Mammary epithelial cell (primary cell): ENCODE measurements at regions of chr7 and their contacts with region 1.

Region 1: GRCh38 chr7:155363852-155364562 is 66.3 kb downstream of the INSIG1 start:
- DNase-seq: no peak
- H3K4me3 ChIP-seq: no peak overlapping the region
- H3K27ac ChIP-seq: no peak overlapping the region
- H3K4me1 ChIP-seq: no peaks in the 10 kb centered on the region
- H3K27me3 ChIP-seq: peaks cover 6% of the 10 kb centered on the region
- CTCF ChIP-seq: no peak

Region 2: GRCh38 chr7:154857767-154858681 is 506.0 kb before region 1 on chr7:
- CTCF ChIA-PET with region 1: no interaction called
- dilution Hi-C with region 1: no loop called
- in situ Hi-C with region 1: no loop called
- intact Hi-C with region 1: no loop called
- DNase-seq: no peak
- H3K4me3 ChIP-seq: no peak overlapping the region
- H3K27ac ChIP-seq: no peak overlapping the region
- H3K4me1 ChIP-seq: no peaks in the 10 kb centered on the region
- H3K27me3 ChIP-seq: no peaks in the 10 kb centered on the region
- CTCF ChIP-seq: no peak

Region 3: GRCh38 chr7:155198901-155199845 is 164.8 kb before region 1 on chr7:
- CTCF ChIA-PET with region 1: no interaction called
- dilution Hi-C with region 1: no loop called
- in situ Hi-C with region 1: no loop called
- intact Hi-C with region 1: no loop called
- DNase-seq: peak; percentile 70
- H3K4me3 ChIP-seq: no peak overlapping the region
- H3K27ac ChIP-seq: no peak overlapping the region
- H3K4me1 ChIP-seq: no peaks in the 10 kb centered on the region
- H3K27me3 ChIP-seq: no peaks in the 10 kb centered on the region
- CTCF ChIP-seq: no peak

Region 4: DNA sequence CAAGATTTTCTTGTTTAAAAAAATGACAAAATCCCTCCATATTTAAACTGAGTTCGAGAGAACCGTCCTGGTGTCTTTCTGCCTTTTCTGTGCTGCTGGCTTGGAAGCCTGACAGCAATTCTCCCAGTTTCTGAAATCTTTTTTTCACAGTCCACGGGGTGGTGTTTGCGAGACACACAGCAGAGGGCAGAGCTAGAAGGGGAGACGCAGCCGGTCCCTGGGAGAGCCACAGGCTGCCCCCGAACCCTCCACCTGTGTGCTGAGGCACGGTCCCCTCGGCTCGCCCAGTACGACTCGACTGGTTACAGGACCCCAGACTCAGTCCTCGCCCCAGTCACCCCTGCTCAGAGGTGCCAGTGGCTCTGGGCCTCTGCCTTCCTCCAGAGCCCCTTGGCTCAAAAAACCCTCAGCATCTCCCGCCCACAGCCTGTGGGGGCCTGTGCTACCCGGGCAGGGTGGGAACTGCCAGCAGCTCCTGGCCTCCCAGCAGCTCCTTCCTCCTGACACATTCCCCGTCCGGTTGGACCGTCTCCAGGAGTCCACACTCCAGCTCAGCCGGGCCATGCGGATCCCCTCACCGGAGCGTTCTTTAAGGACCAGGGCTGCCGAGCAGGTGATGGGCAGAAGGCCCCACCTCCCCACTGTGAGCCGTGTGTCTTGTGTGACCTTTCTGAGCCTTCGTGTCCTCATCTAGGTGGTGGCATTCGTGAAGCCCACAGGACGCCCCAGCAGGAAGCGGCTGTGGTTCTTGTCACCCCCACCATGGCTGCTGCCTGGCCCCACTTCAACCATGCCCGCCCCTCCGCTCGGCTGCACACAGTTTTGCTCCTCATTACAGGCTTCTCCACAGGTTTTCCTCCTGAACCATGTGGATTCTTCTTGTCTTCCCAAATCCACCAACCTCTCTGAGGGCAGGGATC is 41.7 kb after region 1 on chr7:
- CTCF ChIA-PET with region 1: no interaction called
- dilution Hi-C with region 1: no loop called
- in situ Hi-C with region 1: no loop called
- intact Hi-C with region 1: no loop called
- DNase-seq: no peak
- H3K4me3 ChIP-seq: no peak overlapping the region
- H3K27ac ChIP-seq: no peak overlapping the region
- H3K4me1 ChIP-seq: no peaks in the 10 kb centered on the region
- H3K27me3 ChIP-seq: peaks cover 24% of the 10 kb centered on the region
- CTCF ChIP-seq: no peak

Region 5: GRCh38 chr7:155439311-155440017 is 75.5 kb after region 1 on chr7:
- CTCF ChIA-PET with region 1: no interaction called
- dilution Hi-C with region 1: loop called (anchors 5 kb)
- in situ Hi-C with region 1: no loop called
- intact Hi-C with region 1: no loop called
- DNase-seq: no peak
- H3K4me3 ChIP-seq: no peak overlapping the region
- H3K27ac ChIP-seq: no peak overlapping the region
- H3K4me1 ChIP-seq: no peaks in the 10 kb centered on the region
- H3K27me3 ChIP-seq: peaks cover 13% of the 10 kb centered on the region
- CTCF ChIP-seq: no peak